IMR-90 (cell line): ENCODE measurements at regions of chr22 and their contacts with region 1.

Region 1: DNA sequence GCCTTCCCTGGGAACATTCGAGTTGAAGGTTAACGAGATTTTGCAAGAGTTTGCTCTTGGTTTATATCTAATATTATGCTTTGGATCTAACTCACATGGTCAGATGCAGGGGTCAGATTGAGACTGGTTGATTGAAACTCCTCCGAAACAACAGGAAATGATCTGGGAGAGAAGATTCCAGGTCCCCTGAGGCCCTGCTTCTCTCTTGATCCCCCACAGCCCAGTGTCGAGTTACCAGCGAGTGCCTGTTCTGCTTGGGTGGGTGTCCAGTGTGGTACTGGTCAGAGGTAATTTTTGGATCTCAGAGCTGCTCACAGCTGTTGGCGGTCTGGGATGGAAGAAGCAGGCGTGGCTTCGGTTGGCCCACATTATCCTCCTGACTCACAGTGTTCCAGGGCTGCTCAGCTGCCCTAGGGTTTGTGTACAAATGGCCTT is 9.2 kb downstream of the FBLN1 start:
- DNase-seq: peak; percentile 93
- ATAC-seq: peak; percentile 91
- H3K4me3 ChIP-seq: no peak overlapping the region
- H3K27ac ChIP-seq: peak overlapping the region; percentile 61; the same call in 1 of the 2 replicates
- H3K4me1 ChIP-seq: peaks cover 32% of the 10 kb centered on the region
- H3K27me3 ChIP-seq: no peaks in the 10 kb centered on the region
- CTCF ChIP-seq: no peak
- POLR2A ChIP-seq: no peak
- RAD21 ChIP-seq: no peak; the same call in 1 of the 2 replicates

Region 2: DNA sequence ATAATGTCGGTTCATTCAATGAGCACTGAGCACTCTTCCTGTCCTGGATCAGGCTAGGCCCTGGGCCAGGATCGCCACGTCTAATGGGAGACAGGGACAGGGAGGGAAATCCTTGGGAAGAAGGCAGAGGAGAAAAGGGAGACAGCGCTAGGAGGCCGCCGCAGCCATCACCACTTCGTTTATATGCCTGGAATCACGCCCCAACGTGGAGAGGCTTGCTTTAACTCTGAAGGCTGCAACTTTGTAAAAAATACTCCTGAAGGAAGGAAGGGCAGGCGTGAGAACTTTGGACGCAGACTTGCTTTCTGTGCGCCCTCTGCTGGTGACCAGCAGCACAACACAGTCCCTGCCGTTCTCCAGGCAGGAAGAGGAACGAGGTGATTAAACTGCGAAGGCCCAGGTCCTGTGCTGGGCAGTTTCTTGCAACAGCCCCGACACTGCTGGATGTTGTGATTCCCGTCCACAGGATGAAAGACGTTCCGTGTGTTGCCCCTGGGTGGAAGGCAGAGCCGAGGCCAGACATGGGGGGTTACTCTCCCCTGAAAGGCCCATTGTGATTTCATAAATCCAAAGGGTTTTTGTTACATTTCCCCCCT is 76.2 kb before region 1 on chr22:
- CTCF ChIA-PET with region 1: no interaction called
- POLR2A ChIA-PET with region 1: no interaction called
- dilution Hi-C with region 1: no loop called
- in situ Hi-C with region 1: no loop called
- intact Hi-C with region 1: no loop called
- DNase-seq: peak; percentile 90
- ATAC-seq: peak; percentile 96
- H3K4me3 ChIP-seq: no peak overlapping the region
- H3K27ac ChIP-seq: peak overlapping the region; percentile 8; the same call in 1 of the 2 replicates
- H3K4me1 ChIP-seq: 0 out of 2 replicates have a peak, but pooled peaks cover 2% of the 10 kb centered on the region
- H3K27me3 ChIP-seq: no peaks in the 10 kb centered on the region
- CTCF ChIP-seq: peak; percentile 95
- POLR2A ChIP-seq: 0 out of 2 replicates have a peak, but pooled peaks have one; percentile 35
- RAD21 ChIP-seq: peak; percentile 88

Region 3: DNA sequence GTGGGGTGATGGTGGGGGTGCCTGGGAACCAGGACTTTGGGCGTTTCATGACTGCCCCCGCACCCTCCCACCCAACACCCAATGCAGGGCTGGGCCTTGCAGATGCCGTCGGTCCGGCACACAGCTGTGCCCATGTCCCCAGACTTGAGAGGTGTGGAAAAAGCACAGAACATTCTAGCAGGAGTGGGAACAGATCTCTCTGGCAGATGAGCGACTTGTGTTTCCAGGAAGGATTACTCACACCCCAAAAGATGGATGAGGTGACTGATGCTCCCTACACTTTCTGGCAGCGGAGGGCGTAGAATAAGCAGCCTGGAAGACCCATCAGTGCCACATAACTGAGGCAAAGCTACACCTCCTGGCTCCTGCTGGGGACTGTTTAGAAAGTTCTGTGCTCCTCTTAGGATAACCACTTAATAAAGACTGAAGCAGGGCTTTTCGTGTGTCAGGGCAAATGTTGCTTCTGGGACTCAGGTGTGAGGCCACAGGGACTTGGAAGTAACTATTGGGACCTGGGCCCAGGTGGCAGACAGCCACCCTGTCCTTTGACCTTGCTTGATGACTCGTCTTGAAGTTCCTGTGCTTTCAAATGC is 15.0 kb after region 1 on chr22:
- CTCF ChIA-PET with region 1: no interaction called
- POLR2A ChIA-PET with region 1: no interaction called
- dilution Hi-C with region 1: no loop called
- in situ Hi-C with region 1: no loop called
- intact Hi-C with region 1: loop called (anchors 2 kb)
- DNase-seq: peak; percentile 77
- ATAC-seq: peak; percentile 21
- H3K4me3 ChIP-seq: no peak overlapping the region
- H3K27ac ChIP-seq: peak overlapping the region; percentile 30; the same call in 1 of the 2 replicates
- H3K4me1 ChIP-seq: peaks cover 41% of the 10 kb centered on the region
- H3K27me3 ChIP-seq: no peaks in the 10 kb centered on the region
- CTCF ChIP-seq: no peak
- POLR2A ChIP-seq: no peak
- RAD21 ChIP-seq: no peak